GM12878 (cell line): ENCODE measurements at regions of chr6 and their contacts with region 1.

Region 1: DNA sequence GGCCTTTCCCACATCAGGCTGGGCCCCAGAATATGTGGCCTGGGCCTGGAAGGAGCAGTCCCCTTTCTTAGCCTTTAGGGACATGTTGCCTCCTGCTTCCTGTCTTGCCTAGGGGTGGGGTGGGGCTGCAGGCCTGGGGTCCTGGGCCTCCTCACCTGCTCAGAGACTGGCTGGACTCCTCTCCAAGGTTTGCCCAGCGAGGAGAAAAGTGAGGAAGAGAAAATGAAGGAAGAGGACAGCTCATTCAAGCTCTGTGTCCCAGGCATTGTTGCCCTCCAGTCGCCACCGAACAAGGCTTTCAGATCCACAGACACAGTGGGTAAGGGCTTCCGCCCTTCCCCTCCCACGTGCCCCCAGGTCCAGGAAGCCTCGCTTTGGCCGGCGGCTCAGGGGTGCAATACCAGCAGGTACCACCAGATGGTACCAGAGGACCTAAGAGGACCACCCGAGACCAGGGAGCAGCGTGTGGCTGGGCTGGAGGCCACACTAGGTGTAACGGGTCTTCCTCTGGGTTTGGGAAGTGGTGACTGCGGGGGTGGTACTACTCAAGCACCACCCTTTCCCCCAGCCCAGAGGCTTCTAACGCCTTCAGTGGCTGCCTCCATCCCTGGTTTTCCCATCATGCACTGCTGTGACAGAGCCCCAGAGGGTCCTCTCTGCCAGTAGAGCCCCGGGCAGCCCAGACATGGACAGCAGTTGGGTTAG is 5.5 kb upstream of the BAK1 start:
- DNase-seq: peak; percentile 70
- ATAC-seq: peak; percentile 82
- H3K4me3 ChIP-seq: no peak overlapping the region; the same call in 1 of the 2 replicates
- H3K27ac ChIP-seq: peak overlapping the region; percentile 1; the same call in 1 of the 2 replicates
- H3K4me1 ChIP-seq: peaks cover 23% of the 10 kb centered on the region
- H3K27me3 ChIP-seq: no peaks in the 10 kb centered on the region
- CTCF ChIP-seq: peak; percentile 87 to 95 (median 95)
- EP300 ChIP-seq: no peak
- POLR2A ChIP-seq: peak; percentile 48; the same call in 1 of the 2 replicates
- RAD21 ChIP-seq: peak; percentile 85

Region 2: GRCh38 chr6:33599413-33599911 is 13.9 kb after region 1 on chr6:
- CTCF ChIA-PET with region 1: interaction called, 235 read pairs
- POLR2A ChIA-PET with region 1: interaction called, 3 read pairs
- RAD21 ChIA-PET with region 1: interaction called, 4 read pairs
- SMC1A ChIA-PET with region 1: interaction called, 122 read pairs
- in situ Hi-C with region 1: no loop called
- intact Hi-C with region 1: no loop called
- DNase-seq: no peak
- ATAC-seq: no peak
- H3K4me3 ChIP-seq: no peak overlapping the region
- H3K27ac ChIP-seq: no peak overlapping the region
- H3K4me1 ChIP-seq: peaks cover 6% of the 10 kb centered on the region
- H3K27me3 ChIP-seq: no peaks in the 10 kb centered on the region
- CTCF ChIP-seq: no peak
- EP300 ChIP-seq: no peak
- POLR2A ChIP-seq: no peak
- RAD21 ChIP-seq: no peak

Region 3: DNA sequence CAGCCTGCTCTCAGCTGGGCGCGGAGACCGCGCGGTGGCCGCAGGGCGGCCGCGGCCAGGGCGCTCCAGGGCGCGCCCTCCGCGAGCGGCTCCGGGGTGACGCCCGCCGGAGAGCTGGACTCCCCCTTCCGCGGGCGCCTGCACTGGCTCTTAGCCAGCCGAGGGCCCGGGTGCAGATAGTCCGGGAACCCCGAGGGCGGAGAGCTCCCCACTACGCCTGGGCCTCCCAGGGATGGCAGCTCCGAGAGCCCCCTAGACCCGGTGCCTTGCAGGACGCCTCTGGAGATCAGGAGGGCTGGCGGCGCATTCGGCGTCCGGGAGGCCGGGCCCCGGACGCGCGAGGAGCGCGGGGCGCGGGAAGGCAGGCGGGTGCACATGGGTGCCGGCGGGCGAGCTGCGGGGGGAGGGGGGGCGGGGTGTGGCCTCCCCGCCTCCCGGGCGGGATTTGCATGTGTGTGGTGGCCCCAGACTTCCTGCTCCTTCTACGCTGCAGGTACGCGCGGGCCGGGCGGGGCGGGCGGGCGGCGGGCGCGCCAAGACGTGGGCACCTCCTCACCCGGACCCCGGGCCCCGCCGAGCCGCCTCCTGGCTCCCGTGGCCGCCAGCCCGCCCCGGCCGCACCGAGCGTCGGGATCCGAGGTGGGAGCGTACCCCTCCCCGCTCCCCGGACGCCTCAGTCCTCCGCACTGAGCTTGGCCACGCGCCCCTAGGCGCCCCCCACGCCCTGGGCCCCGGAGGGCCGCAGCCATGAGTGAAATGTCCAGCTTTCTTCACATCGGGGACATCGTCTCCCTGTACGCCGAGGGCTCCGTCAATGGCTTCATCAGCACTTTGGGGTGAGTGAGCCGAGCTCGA is 35.5 kb after region 1 on chr6 and contains the start of gene ITPR3:
- CTCF ChIA-PET with region 1: interaction called, 18 read pairs
- POLR2A ChIA-PET with region 1: interaction called, 11 read pairs
- RAD21 ChIA-PET with region 1: interaction called, 14 read pairs
- SMC1A ChIA-PET with region 1: interaction called, 7 read pairs
- in situ Hi-C with region 1: no loop called
- intact Hi-C with region 1: no loop called
- DNase-seq: peak; percentile 28
- ATAC-seq: peak; percentile 80
- H3K4me3 ChIP-seq: peak within 1 kb of the TSS; percentile 86
- H3K27ac ChIP-seq: peak within 1 kb of the TSS; percentile 88
- H3K4me1 ChIP-seq: peaks cover 14% of the 10 kb centered on the region
- H3K27me3 ChIP-seq: no peaks in the 10 kb centered on the region
- CTCF ChIP-seq: no peak
- EP300 ChIP-seq: no peak
- POLR2A ChIP-seq: peak; percentile 72
- RAD21 ChIP-seq: no peak
- polyA plus RNA-seq, gene ITPR3: 0.32 to 0.44 TPM

Region 4: GRCh38 chr6:33700391-33701050 is 115.0 kb after region 1 on chr6:
- CTCF ChIA-PET with region 1: interaction called, 110 read pairs
- POLR2A ChIA-PET with region 1: interaction called, 6 read pairs
- RAD21 ChIA-PET with region 1: interaction called, 14 read pairs
- SMC1A ChIA-PET with region 1: interaction called, 29 read pairs
- in situ Hi-C with region 1: loop called (anchors 5 kb)
- intact Hi-C with region 1: loop called (anchors 1 kb)
- DNase-seq: no peak
- ATAC-seq: peak; percentile 94
- H3K4me3 ChIP-seq: no peak overlapping the region
- H3K27ac ChIP-seq: peak overlapping the region; percentile 24
- H3K4me1 ChIP-seq: peaks cover 20% of the 10 kb centered on the region
- H3K27me3 ChIP-seq: no peaks in the 10 kb centered on the region
- CTCF ChIP-seq: peak; percentile 85 to 89 (median 88)
- EP300 ChIP-seq: no peak
- POLR2A ChIP-seq: no peak
- RAD21 ChIP-seq: peak; percentile 75

Region 5: GRCh38 chr6:33744001-33744848 is 158.7 kb after region 1 on chr6:
- CTCF ChIA-PET with region 1: interaction called, 7 read pairs
- POLR2A ChIA-PET with region 1: interaction called, 7 read pairs
- RAD21 ChIA-PET with region 1: no interaction called
- SMC1A ChIA-PET with region 1: interaction called, 3 read pairs
- in situ Hi-C with region 1: no loop called
- intact Hi-C with region 1: loop called (anchors 1 kb)
- DNase-seq: no peak
- ATAC-seq: peak; percentile 94
- H3K4me3 ChIP-seq: no peak overlapping the region
- H3K27ac ChIP-seq: no peak overlapping the region
- H3K4me1 ChIP-seq: no peaks in the 10 kb centered on the region
- H3K27me3 ChIP-seq: no peaks in the 10 kb centered on the region; a peak in 2 of 4 replicates
- CTCF ChIP-seq: peak; percentile 90 to 97 (median 91)
- EP300 ChIP-seq: no peak
- POLR2A ChIP-seq: no peak
- RAD21 ChIP-seq: peak; percentile 62